Mammary epithelial cell (primary cell): ENCODE measurements at regions of chr13 and their contacts with region 1.

Region 1: GRCh38 chr13:20945952-20946383 is 43.4 kb upstream of the XPO4 start:
- DNase-seq: no peak
- H3K4me3 ChIP-seq: no peak overlapping the region
- H3K27ac ChIP-seq: no peak overlapping the region
- H3K4me1 ChIP-seq: no peaks in the 10 kb centered on the region
- H3K27me3 ChIP-seq: no peaks in the 10 kb centered on the region
- CTCF ChIP-seq: no peak

Region 2: DNA sequence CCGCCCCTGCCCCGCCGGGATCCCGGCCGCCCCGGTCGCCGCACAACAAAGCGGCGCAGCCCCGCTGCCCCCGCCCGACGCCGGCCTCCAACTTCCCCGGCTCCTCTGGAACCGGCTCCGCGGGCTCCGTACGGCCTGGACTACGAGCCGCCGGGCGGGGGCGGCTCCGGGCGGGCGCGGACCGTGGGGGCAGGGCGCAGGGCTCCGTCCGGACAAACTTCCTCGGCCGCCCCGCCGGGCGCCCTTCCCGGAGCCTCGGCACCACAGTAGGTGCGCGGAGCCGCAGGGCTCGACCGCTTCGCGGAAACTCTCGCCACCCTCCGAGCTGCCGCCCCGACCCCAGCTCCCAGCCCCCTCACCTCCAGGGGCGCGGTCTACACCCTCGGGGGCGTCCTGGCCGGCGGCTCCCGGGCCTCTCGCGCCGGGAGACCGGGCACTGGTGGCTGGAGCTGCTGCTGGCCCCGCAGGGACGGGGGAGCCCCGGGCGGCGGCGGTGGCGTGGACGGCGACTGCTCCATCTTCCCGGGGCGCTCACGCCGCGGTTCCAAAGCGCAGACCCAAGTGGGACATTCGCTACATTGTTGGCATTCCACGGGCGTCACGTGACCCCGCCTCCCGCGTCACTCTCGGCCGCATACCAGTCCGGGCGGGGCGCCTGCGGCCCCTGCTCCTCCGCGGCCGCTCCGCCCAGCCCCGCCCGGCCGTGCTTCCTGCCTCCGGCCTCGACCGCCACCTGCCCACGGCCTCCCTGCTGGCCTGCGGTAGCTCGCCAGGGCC is 115.2 kb after region 1 on chr13 and contains the start of gene LATS2:
- CTCF ChIA-PET with region 1: interaction called, 4 read pairs
- dilution Hi-C with region 1: no loop called
- in situ Hi-C with region 1: no loop called
- intact Hi-C with region 1: loop called (anchors 2 kb)
- DNase-seq: peak; percentile 87
- H3K4me3 ChIP-seq: peak within 1 kb of the TSS; percentile 62 to 87 (median 77)
- H3K27ac ChIP-seq: peak within 1 kb of the TSS; percentile 80
- H3K4me1 ChIP-seq: peaks cover 7% of the 10 kb centered on the region
- H3K27me3 ChIP-seq: no peaks in the 10 kb centered on the region
- CTCF ChIP-seq: peak in 1 of 2 donors; percentile 23
- total RNA-seq, gene LATS2: 18.0 to 19.8 TPM

Region 3: GRCh38 chr13:21106089-21106488 is 160.1 kb after region 1 on chr13:
- CTCF ChIA-PET with region 1: no interaction called
- dilution Hi-C with region 1: no loop called
- in situ Hi-C with region 1: no loop called
- intact Hi-C with region 1: loop called (anchors 1 kb)
- DNase-seq: no peak
- H3K4me3 ChIP-seq: no peak overlapping the region
- H3K27ac ChIP-seq: no peak overlapping the region
- H3K4me1 ChIP-seq: peaks cover 5% of the 10 kb centered on the region
- H3K27me3 ChIP-seq: no peaks in the 10 kb centered on the region
- CTCF ChIP-seq: no peak

Region 4: DNA sequence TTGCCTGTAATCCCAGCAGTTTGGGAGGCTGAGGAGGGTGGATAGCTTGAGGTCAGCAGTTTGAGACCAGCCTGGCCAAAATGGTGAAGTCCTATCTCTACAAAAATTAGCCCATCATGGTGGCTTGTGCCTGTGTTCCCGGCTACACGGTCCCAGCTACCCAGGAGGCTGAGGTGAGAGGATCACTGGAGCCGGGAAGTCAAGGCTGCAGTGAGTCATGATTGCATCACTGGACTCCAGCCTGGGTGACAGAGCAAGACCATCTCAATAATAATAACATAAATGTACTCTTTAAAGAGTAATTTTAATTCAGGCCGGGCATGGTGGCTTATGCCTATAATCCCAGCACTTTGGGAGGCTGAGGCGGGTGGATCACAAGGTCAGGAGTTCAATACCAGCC is 191.7 kb after region 1 on chr13:
- CTCF ChIA-PET with region 1: no interaction called
- dilution Hi-C with region 1: no loop called
- in situ Hi-C with region 1: loop called in 1 of 2 experiments (anchors 10 kb)
- intact Hi-C with region 1: loop called (anchors 1 kb)
- DNase-seq: peak; percentile 29
- H3K4me3 ChIP-seq: no peak overlapping the region
- H3K27ac ChIP-seq: no peak overlapping the region
- H3K4me1 ChIP-seq: peaks cover 6% of the 10 kb centered on the region
- H3K27me3 ChIP-seq: no peaks in the 10 kb centered on the region
- CTCF ChIP-seq: no peak

Region 5: GRCh38 chr13:21176220-21176982 is 230.4 kb after region 1 on chr13 and contains the starts of genes MRPL57 and SKA3:
- CTCF ChIA-PET with region 1: no interaction called
- dilution Hi-C with region 1: no loop called
- in situ Hi-C with region 1: no loop called
- intact Hi-C with region 1: loop called (anchors 1 kb)
- DNase-seq: peak; percentile 94
- H3K4me3 ChIP-seq: peak within 1 kb of the TSS; percentile 86 to 95 (median 90)
- H3K27ac ChIP-seq: peak within 1 kb of the TSS; percentile 80
- H3K4me1 ChIP-seq: peaks cover 7% of the 10 kb centered on the region
- H3K27me3 ChIP-seq: no peaks in the 10 kb centered on the region
- CTCF ChIP-seq: no peak
- total RNA-seq, gene MRPL57: 14.5 to 18.8 TPM
- total RNA-seq, gene SKA3: 5.0 to 14.6 TPM